ENCODE measurements at regions of chr16 and their contacts with region 1.

Region 1: DNA sequence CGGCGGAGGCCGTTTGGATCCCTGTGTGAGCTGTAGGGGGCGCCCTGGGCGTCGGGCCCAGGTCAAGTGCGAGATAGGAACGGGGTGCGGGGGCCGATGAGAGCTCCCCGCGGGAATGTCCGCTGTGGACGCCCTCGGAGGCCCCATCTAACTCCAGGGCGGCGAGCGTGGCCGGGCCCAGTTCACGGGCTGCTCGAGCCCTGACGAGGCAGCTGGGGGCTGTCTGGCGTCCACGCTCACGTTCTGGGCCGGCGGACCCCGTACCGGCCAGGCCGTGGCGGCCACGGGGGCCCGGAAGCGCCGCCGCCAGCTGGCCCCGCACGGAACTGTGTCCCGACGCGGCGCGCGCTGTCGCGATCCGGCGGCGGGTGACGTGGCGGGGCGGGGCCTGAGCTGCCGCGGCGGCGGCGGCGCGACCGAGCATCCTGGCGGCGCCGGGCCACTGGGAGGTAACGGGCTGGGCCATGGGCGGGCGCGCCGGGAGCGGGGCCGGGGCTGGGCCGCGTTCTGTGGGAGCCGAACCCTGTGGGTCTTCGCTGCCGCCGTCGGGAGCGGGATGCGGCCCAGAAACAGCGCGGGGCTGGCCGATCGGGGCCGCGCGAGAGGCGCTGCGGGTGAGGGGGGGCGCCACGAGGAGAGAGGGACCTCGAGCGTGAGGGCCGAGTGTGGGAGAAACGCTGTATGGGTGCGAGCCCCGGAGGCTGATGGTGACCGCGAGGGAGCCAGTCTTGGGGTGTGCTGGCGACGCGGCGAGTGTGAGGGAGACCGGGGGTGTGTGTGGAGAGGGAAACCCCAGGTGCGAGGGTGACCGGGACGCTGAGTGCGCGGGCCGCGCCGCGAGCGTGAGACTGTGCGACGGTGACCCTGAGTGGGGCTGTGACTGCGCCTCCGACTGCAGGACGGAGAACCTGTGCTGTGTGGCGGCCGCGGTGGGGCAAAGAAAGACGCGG is at the start of gene SLC7A6:
- DNase-seq: no peak
- H3K4me3 ChIP-seq: peak within 1 kb of the TSS; percentile 98
- H3K27me3 ChIP-seq: no peaks in the 10 kb centered on the region
- CTCF ChIP-seq: peak; percentile 84
- polyA plus RNA-seq, gene SLC7A6: 45.7 and 51.2 TPM in 2 replicates

Region 2: DNA sequence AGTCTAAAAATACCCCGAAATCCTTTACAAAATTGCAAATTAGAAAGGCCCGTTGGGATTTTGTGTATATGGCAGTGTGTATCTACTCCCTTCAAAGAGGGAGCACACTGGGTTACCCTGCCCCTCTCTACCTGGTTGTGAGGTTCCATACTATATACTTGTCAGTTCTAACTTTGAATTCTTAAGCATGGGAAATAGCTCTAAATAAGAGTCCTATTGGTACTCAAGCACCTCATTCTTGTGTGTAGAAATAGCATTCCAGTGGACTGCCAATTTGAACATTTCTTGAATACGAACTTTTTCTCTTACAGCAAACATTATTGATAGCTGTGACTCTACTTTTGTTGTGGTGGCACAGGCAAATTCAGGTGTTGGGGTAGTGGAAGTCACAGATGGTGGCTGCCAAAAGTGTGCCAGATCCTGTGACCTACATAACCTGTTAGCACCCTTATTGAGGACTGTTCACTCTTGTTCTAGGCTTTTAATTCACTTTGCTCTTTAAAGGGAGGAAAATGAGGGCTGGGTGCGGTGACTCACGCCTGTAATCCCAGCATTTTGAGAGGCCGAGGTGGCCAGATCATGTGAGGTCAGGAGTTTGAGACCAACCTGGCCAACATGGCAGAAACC is 44.6 kb before region 1 on chr16:
- CTCF ChIA-PET with region 1: no interaction called
- POLR2A ChIA-PET with region 1: no interaction called
- DNase-seq: no peak
- H3K4me3 ChIP-seq: no peak overlapping the region
- H3K27me3 ChIP-seq: no peaks in the 10 kb centered on the region
- CTCF ChIP-seq: no peak

Region 3: GRCh38 chr16:68244903-68245853 is 19.2 kb before region 1 on chr16 and contains the start of gene PLA2G15:
- CTCF ChIA-PET with region 1: interaction called, 27 read pairs
- POLR2A ChIA-PET with region 1: interaction called, 4 read pairs
- DNase-seq: no peak
- H3K4me3 ChIP-seq: peak within 1 kb of the TSS; percentile 92
- H3K27me3 ChIP-seq: no peaks in the 10 kb centered on the region
- CTCF ChIP-seq: 0 out of 2 replicates have a peak, but pooled peaks have one; percentile 8
- polyA plus RNA-seq, gene PLA2G15: 23.9 and 39.2 TPM in 2 replicates

Region 4: GRCh38 chr16:68289621-68290329 is 25.4 kb after region 1 on chr16:
- CTCF ChIA-PET with region 1: interaction called, 25 read pairs
- POLR2A ChIA-PET with region 1: no interaction called
- DNase-seq: peak; percentile 31
- H3K4me3 ChIP-seq: no peak overlapping the region
- H3K27me3 ChIP-seq: no peaks in the 10 kb centered on the region
- CTCF ChIP-seq: no peak

Region 5: GRCh38 chr16:68310761-68311511 is 46.5 kb after region 1 on chr16 and contains the starts of genes PRMT7 and SLC7A6OS:
- CTCF ChIA-PET with region 1: interaction called, 22 read pairs
- POLR2A ChIA-PET with region 1: interaction called, 4 read pairs
- DNase-seq: no peak
- H3K4me3 ChIP-seq: peak within 1 kb of the TSS; percentile 98
- H3K27me3 ChIP-seq: no peaks in the 10 kb centered on the region
- CTCF ChIP-seq: peak; percentile 32
- polyA plus RNA-seq, gene PRMT7: 24.0 and 40.0 TPM in 2 replicates
- polyA plus RNA-seq, gene SLC7A6OS: 5.3 and 6.9 TPM in 2 replicates